ENCODE measurements at regions of chr4 and their contacts with region 1.

Region 1: DNA sequence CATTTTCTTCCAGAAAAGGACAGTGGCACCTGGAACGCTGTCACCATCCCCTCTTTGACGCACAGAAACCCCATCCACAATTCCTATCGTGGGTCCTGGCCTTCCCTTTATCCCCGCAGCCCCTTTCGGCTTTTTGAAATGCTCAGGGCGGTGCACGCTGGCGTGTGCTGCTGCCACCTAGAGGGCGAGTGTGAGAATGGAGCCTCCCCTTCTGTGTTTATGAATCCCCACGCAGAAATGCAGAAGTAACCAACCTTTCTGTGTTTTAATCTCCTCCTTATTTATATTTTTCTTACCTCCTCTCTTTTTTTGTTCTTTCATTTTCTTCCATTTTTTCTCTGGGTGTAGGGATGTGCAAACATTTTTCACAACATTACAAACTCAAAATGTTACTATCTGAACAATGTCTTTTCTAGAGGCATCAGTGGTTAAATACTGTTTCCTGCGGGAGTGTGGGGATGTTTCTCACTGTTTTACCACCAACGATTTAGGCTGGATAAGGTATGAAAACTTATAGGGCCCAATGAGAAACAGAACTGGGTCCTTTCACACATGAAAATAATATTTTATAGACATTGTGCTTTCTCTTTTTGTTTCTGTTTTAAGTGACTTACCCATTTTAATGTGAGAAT is 50.0 kb downstream of the TMA16 start:
- DNase-seq: peak; percentile 75
- H3K4me3 ChIP-seq: peak overlapping the region; percentile 34 to 54
- H3K27ac ChIP-seq: no peak overlapping the region
- H3K4me1 ChIP-seq: peaks cover 0 to 13% of the 10 kb centered on the region in 2 experiments; a peak in 3 of 4 replicates
- H3K27me3 ChIP-seq: no peaks in the 10 kb centered on the region
- CTCF ChIP-seq: peak; percentile 94
- EP300 ChIP-seq: no peak
- RAD21 ChIP-seq: peak; percentile 73

Region 2: DNA sequence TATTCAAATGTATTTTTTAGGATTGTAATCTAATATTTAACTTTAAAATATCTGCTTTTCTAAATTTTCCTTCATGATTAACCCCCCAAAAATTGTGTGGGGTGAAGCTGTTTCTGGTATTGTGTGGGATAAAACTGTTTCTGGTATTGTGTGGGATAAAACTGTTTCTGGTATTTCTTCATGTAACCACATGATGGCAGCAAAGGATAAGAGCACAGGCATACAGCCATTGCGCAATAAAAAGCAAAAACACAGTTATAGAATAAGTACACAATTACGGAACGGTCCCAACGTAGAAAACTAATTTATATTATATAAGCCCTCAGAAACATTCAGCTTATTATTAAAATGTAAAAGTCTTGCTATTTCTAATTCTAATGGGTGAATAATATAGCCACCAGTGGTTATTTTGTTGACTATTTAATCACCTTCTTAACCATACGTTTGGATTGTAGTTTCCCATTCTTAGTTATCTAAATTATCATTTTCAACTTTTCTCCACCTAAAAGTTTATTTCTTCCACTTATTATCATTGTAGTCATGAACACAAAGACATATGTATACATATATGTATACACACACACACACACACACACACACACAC is 1046.9 kb before region 1 on chr4:
- CTCF ChIA-PET with region 1: interaction called, 32 read pairs
- POLR2A ChIA-PET with region 1: no interaction called
- DNase-seq: peak; percentile 34
- H3K4me3 ChIP-seq: no peak overlapping the region
- H3K27ac ChIP-seq: no peak overlapping the region
- H3K4me1 ChIP-seq: no peaks in the 10 kb centered on the region; a peak in 1 of 4 replicates
- H3K27me3 ChIP-seq: no peaks in the 10 kb centered on the region; the same call in 1 of the 2 replicates
- CTCF ChIP-seq: peak; percentile 84
- EP300 ChIP-seq: no peak
- RAD21 ChIP-seq: peak; percentile 95

Region 3: DNA sequence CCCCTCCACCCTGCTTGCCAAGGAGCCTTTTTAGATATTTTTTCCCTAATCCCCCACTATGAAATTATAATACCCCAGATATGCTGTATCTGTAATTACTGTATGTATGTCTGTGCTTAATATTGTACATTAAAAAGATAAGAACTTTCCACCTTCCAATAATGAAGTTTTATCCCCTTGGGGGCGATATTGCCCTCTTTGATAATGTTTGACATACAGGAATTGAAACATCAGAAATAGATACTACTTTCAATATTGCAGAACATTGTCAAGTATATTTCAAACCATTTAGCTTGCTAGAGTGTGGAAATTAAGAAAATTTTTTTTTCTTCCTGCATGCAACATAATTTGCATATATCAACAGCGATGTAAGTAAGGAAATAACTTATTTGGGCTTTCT is 436.8 kb before region 1 on chr4:
- CTCF ChIA-PET with region 1: no interaction called
- POLR2A ChIA-PET with region 1: no interaction called
- DNase-seq: no peak
- H3K4me3 ChIP-seq: no peak overlapping the region
- H3K27ac ChIP-seq: no peak overlapping the region
- H3K4me1 ChIP-seq: no peaks in the 10 kb centered on the region; a peak in 1 of 4 replicates
- H3K27me3 ChIP-seq: no peaks in the 10 kb centered on the region
- CTCF ChIP-seq: peak; percentile 53
- EP300 ChIP-seq: no peak
- RAD21 ChIP-seq: peak; percentile 46

Region 4: DNA sequence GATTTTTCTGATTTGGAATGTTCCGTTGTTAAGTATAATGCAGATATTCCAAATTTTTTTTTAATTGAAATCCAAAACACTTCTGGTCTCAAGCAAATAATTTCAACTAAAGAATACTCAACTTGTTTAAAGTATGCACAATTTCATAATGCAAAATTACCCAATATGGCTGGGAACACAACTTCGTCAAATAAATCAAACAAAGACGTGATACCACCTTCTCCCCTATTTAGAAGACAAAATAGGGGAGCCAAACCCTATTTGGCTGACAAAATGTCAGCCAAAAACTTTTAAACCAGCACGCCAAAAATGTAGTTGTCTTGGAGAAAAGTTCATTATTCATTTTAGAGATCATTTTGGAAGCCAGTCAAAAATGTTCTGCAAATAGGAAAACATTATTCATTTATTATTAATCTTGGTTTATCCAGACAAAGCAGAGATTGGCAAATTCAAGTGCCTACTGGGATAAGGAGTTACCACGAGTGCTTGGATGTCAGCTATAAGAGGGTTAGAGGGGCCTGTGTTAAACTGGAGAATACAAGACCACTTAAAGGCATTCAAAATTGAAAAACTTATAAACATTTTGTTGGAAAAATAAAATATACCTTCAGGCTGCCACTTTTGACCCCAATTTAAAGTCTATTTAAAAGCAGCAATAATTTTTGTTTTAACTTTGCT is 67.6 kb before region 1 on chr4:
- CTCF ChIA-PET with region 1: interaction called, 50 read pairs
- POLR2A ChIA-PET with region 1: no interaction called
- DNase-seq: no peak
- H3K4me3 ChIP-seq: no peak overlapping the region
- H3K27ac ChIP-seq: no peak overlapping the region
- H3K4me1 ChIP-seq: no peaks in the 10 kb centered on the region
- H3K27me3 ChIP-seq: peaks cover 38% of the 10 kb centered on the region; the same call in 1 of the 2 replicates
- CTCF ChIP-seq: no peak
- EP300 ChIP-seq: no peak
- RAD21 ChIP-seq: no peak

Region 5: DNA sequence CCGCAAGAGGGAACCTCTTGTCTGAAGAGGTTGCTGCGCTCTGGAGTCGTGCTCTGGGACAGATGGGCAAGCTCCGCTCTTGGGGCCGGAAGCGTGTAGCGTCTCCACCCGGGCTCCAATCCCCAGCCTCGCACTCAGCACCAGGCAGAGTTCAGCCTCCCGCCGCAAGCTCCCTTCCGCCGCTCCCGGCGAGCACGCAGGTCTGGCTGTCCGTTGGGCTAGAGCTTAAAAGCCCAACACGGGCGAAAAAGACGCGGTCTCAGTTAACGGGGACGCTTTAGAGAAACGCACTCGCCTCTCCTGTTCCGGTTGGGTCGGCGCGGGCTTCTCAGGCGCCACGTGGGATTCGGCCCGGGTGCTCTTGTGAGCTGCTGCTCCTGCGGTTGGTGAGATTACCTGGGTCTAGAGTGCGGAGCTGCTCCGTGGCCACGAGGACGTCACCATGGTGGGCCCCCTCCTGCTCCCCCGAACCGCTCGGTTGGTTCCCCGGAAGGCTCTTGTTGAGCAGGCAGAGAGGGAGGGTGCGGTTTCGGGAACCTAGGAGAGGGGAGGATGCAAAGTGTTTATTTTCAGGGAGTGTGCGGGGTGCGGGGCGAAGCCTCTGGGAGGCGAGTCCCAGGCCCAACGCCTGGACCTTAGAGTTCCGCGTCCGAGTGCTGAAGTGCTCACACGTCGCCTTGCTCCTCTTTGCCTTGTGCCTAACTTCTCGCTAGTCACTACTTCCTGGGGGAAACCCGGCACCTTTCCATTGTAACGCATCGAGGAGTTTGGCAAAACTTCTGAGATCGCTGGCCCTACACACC is 50.0 kb before region 1 on chr4 and contains the start of gene TMA16:
- CTCF ChIA-PET with region 1: interaction called, 60 read pairs
- POLR2A ChIA-PET with region 1: interaction called, 6 read pairs
- DNase-seq: peak; percentile 88
- H3K4me3 ChIP-seq: peak within 1 kb of the TSS; percentile 84 to 96
- H3K27ac ChIP-seq: peak within 1 kb of the TSS; percentile 75 to 88
- H3K4me1 ChIP-seq: peaks cover 5 to 14% of the 10 kb centered on the region in 2 experiments; a peak in 3 of 4 replicates
- H3K27me3 ChIP-seq: 0 out of 2 replicates have a peak, but pooled peaks cover 2% of the 10 kb centered on the region
- CTCF ChIP-seq: 0 out of 2 replicates have a peak, but pooled peaks have one; percentile 5
- EP300 ChIP-seq: peak in 1 of 2 experiments; percentile 11; a peak in 1 of 4 replicates
- RAD21 ChIP-seq: no peak
- polyA plus RNA-seq, gene TMA16: 10.0 and 10.6 TPM in 2 replicates

Region 6: GRCh38 chr4:163534056-163534455 is 10.5 kb before region 1 on chr4:
- CTCF ChIA-PET with region 1: interaction called, 60 read pairs
- POLR2A ChIA-PET with region 1: no interaction called
- DNase-seq: no peak
- H3K4me3 ChIP-seq: no peak overlapping the region
- H3K27ac ChIP-seq: no peak overlapping the region
- H3K4me1 ChIP-seq: no peaks in the 10 kb centered on the region
- H3K27me3 ChIP-seq: no peaks in the 10 kb centered on the region
- CTCF ChIP-seq: no peak
- EP300 ChIP-seq: no peak
- RAD21 ChIP-seq: no peak

Region 7: DNA sequence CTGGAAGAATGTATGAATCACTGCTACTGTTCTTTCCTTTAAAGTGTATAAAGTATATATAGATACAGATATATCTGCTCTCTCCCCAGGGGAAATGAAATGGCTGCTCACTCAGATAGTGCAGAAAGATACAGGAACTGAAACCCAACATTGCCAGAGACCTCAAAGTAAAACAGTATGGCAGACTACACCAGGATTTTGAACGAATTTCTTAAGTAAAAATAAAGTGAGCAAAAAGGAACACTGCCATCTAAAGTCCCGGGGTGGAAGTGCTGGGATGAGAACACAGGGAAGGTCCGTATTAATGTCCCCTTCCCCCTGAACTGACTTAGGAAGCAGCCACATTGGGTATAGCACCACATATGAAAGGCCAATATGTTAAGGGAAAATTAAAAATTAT is 43.3 kb after region 1 on chr4:
- CTCF ChIA-PET with region 1: no interaction called
- POLR2A ChIA-PET with region 1: no interaction called
- DNase-seq: peak; percentile 16
- H3K4me3 ChIP-seq: peak overlapping the region in 1 of 2 experiments; percentile 26; a peak in 1 of 4 replicates
- H3K27ac ChIP-seq: no peak overlapping the region
- H3K4me1 ChIP-seq: no peaks in the 10 kb centered on the region
- H3K27me3 ChIP-seq: no peaks in the 10 kb centered on the region
- CTCF ChIP-seq: peak; percentile 46
- EP300 ChIP-seq: no peak
- RAD21 ChIP-seq: no peak

Region 8: GRCh38 chr4:163895378-163896005 is 351.0 kb after region 1 on chr4:
- CTCF ChIA-PET with region 1: no interaction called
- POLR2A ChIA-PET with region 1: no interaction called
- DNase-seq: no peak
- H3K4me3 ChIP-seq: no peak overlapping the region
- H3K27ac ChIP-seq: no peak overlapping the region
- H3K4me1 ChIP-seq: no peaks in the 10 kb centered on the region
- H3K27me3 ChIP-seq: no peaks in the 10 kb centered on the region
- CTCF ChIP-seq: no peak
- EP300 ChIP-seq: no peak
- RAD21 ChIP-seq: no peak

Region 9: GRCh38 chr4:164731827-164732474 is 1187.4 kb after region 1 on chr4:
- CTCF ChIA-PET with region 1: interaction called, 24 read pairs
- POLR2A ChIA-PET with region 1: no interaction called
- DNase-seq: peak; percentile 54
- H3K4me3 ChIP-seq: peak overlapping the region in 1 of 2 experiments; percentile 31; a peak in 1 of 4 replicates
- H3K27ac ChIP-seq: no peak overlapping the region
- H3K4me1 ChIP-seq: peaks cover 0 to 5% of the 10 kb centered on the region in 2 experiments; a peak in 1 of 4 replicates
- H3K27me3 ChIP-seq: no peaks in the 10 kb centered on the region; the same call in 1 of the 2 replicates
- CTCF ChIP-seq: peak; percentile 93
- EP300 ChIP-seq: no peak
- RAD21 ChIP-seq: peak; percentile 75

Measured in SK-N-SH (cell line).